ENCODE measurements at regions of chr22 and their contacts with region 1.

Region 1: GRCh38 chr22:28759861-28760560 is 12.5 kb upstream of the CCDC117 start:
- DNase-seq: peak; percentile 25
- ATAC-seq: peak; percentile 52
- H3K4me3 Mint-ChIP-seq: peak overlapping the region; percentile 51
- H3K27ac Mint-ChIP-seq: peak overlapping the region; percentile 98
- H3K4me1 Mint-ChIP-seq: peaks cover 29% of the 10 kb centered on the region
- H3K27me3 Mint-ChIP-seq: no peaks in the 10 kb centered on the region
- CTCF ChIP-seq: no peak

Region 2: GRCh38 chr22:28772633-28773460 is 12.8 kb after region 1 on chr22 and contains the start of gene CCDC117:
- CTCF ChIA-PET with region 1: interaction called, 4 read pairs
- POLR2A ChIA-PET with region 1: interaction called, 13 read pairs
- DNase-seq: peak; percentile 94
- ATAC-seq: peak; percentile 90
- H3K4me3 Mint-ChIP-seq: peak within 1 kb of the TSS; percentile 95
- H3K27ac Mint-ChIP-seq: peak within 1 kb of the TSS; percentile 96
- H3K4me1 Mint-ChIP-seq: peaks cover 13% of the 10 kb centered on the region
- H3K27me3 Mint-ChIP-seq: no peaks in the 10 kb centered on the region
- CTCF ChIP-seq: no peak
- total RNA-seq, gene CCDC117: 39.0 to 47.4 TPM (median 46.9 TPM) in 3 replicates

Measured in WTC11 (cell line).